Activated B cell treated with CpG ODN at 0.5 μM for 24 hours (primary cell): ENCODE measurements at regions of chr7 and their contacts with region 1.

Region 1: DNA sequence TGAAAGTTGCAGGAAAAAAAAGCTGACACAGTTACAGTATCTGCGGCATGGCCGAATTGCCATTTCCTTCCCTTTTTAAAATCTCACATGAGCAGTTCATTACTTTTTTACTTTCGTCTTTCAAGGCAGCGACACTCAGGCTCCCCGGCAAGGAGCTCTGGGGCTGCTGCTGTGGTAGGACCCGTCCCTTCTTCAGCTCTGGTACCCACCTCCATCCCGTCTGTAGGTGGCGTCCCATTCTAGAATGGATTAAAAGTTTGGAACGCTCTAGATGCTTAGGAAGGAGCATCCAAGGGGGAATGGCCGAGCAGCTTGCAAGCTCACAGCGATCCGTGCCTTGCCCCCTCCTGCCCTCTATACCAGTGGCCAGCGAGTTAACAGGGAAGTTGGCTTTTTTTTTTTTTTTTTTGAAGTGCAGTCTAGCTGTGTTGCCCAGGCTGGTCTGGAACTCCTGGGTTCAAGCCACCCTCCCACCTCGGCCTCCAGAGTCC is 22.8 kb upstream of the TTYH3 start:
- DNase-seq: no peak
- ATAC-seq: peak; percentile 93
- H3K4me3 Mint-ChIP-seq: peak overlapping the region; percentile 71
- H3K27ac Mint-ChIP-seq: peak overlapping the region; percentile 50
- H3K4me1 Mint-ChIP-seq: peaks cover 27% of the 10 kb centered on the region
- H3K27me3 Mint-ChIP-seq: no peaks in the 10 kb centered on the region
- CTCF ChIP-seq: no peak

Region 2: DNA sequence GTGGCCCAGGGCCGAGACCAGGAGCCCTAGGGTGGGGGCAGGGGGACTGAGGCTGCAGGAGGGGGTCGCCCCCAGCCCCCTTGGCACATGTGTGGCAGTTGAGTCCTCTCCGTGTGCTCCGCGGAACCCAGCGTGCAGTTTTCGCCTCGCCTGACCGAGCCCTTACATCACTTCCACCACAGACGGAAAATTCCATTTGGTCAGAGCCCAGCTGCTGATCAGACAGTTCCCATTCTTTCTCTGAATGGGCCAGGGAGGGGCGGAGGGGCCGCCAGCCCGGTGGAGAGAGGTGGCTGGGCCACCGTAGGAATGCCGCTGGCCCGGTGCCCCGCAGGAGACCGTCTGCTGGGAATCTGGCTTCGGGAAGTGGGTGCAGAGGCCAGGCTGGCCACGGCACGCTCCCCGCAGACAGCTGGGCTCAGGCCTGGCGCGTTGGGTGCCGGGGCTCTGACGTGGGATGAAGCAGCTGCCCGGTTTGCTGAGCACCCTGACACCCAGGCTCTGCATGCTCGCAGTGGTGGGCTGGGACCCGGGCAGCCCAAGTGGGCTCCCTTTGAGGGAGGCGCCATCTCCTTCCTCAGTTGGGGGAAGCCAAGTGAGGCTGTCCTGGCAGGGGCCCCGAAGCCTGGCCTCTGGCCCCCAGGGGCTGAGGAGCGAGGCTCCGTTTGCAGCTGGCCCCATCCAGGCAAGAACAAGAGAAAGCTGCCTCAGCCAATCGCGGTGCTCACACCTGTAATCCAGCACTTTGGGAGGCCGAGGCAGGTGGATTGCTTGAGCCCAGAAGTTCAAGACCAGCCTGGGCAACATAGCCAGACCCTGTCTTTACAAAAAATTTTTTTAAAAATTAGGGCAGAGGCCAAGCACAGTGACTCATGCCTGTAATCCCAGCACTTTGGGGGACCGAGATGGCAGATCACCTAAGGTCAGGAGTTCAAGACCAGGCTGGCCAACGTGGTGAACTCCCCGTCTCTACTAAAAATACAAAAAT is 32.7 kb after region 1 on chr7:
- CTCF ChIA-PET with region 1: interaction called, 7 read pairs
- POLR2A ChIA-PET with region 1: interaction called, 4 read pairs
- intact Hi-C with region 1: loop called (anchors 2 kb)
- DNase-seq: peak; percentile 66
- ATAC-seq: peak; percentile 59
- H3K4me3 Mint-ChIP-seq: peak overlapping the region; percentile 68
- H3K27ac Mint-ChIP-seq: peak overlapping the region; percentile 80
- H3K4me1 Mint-ChIP-seq: peaks cover 67% of the 10 kb centered on the region
- H3K27me3 Mint-ChIP-seq: no peaks in the 10 kb centered on the region
- CTCF ChIP-seq: no peak

Region 3: GRCh38 chr7:2670720-2671391 is 61.9 kb after region 1 on chr7:
- CTCF ChIA-PET with region 1: interaction called, 9 read pairs
- POLR2A ChIA-PET with region 1: no interaction called
- intact Hi-C with region 1: loop called (anchors 2 kb)
- DNase-seq: peak; percentile 65
- ATAC-seq: peak; percentile 87
- H3K4me3 Mint-ChIP-seq: no peak overlapping the region
- H3K27ac Mint-ChIP-seq: no peak overlapping the region
- H3K4me1 Mint-ChIP-seq: peaks cover 7% of the 10 kb centered on the region
- H3K27me3 Mint-ChIP-seq: peaks cover 11% of the 10 kb centered on the region
- CTCF ChIP-seq: peak; percentile 64

Region 4: GRCh38 chr7:2971914-2972834 is 363.2 kb after region 1 on chr7:
- CTCF ChIA-PET with region 1: no interaction called
- POLR2A ChIA-PET with region 1: no interaction called
- intact Hi-C with region 1: no loop called
- DNase-seq: no peak
- ATAC-seq: peak; percentile 67
- H3K4me3 Mint-ChIP-seq: peak overlapping the region; percentile 64
- H3K27ac Mint-ChIP-seq: peak overlapping the region; percentile 79
- H3K4me1 Mint-ChIP-seq: peaks cover 43% of the 10 kb centered on the region
- H3K27me3 Mint-ChIP-seq: no peaks in the 10 kb centered on the region
- CTCF ChIP-seq: no peak